Activated T-helper 1 cell treated with anti-CD3 and anti-CD28 coated beads, Interleukin-12 subunit alpha, Interleukin-12 subunit beta, Interleukin-2, Interleukin-4 antibody, amounts not matched to agents 30 ng/mL and 10 ng/mL and 1 ng/mL, durations not matched to agents 14 hours and 24 hours and 36 hours (primary cell): ENCODE measurements at regions of chr18 and their contacts with region 1.

Region 1: DNA sequence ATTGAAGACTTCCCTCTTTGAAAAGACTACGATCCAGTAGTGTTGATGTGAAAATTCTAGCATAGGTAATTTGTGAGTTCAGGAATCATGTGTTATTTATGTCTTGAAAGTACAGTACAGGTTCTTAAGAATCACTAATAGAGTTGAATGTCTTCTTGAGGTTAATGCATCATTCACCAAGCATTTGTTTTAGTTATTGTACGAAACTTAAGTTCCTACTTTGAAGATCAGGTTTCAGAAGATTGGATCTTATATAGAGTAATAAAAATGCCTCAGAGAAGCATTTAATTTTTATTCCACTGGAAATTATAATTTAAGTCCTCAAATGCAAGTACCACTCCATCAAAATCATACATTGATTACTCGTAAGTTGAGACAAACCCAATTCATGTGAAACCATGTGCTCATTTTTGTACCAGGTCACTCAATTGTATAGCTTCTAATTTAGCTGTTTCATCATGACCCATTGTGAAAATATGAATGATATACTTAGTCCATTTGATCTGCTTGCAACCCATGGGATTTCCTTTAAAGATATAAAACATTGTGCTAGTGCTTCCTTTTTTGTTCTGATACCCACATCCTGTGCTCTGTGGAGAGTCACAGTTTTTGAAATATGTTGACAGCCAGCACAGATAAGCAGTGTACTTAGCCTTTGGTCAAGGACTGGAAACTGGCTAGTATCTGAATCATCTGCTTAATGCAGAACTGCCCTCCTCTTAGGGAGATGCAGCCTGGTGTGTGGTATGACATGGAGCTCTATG is 22.5 kb upstream of the RAB27B start:
- DNase-seq: peak; percentile 11
- H3K4me3 Mint-ChIP-seq: no peak overlapping the region
- H3K27ac Mint-ChIP-seq: peak overlapping the region; percentile 6
- H3K4me1 Mint-ChIP-seq: peaks cover 10% of the 10 kb centered on the region
- H3K27me3 Mint-ChIP-seq: peaks cover 4% of the 10 kb centered on the region

Region 2: GRCh38 chr18:54023471-54023870 is 782.3 kb before region 1 on chr18:
- intact Hi-C with region 1: no loop called
- DNase-seq: no peak
- H3K4me3 Mint-ChIP-seq: no peak overlapping the region
- H3K27ac Mint-ChIP-seq: no peak overlapping the region
- H3K4me1 Mint-ChIP-seq: no peaks in the 10 kb centered on the region
- H3K27me3 Mint-ChIP-seq: peaks cover 5% of the 10 kb centered on the region

Region 3: GRCh38 chr18:54181856-54182602 is 623.7 kb before region 1 on chr18:
- intact Hi-C with region 1: loop called (anchors 10 kb)
- DNase-seq: no peak
- H3K4me3 Mint-ChIP-seq: no peak overlapping the region
- H3K27ac Mint-ChIP-seq: no peak overlapping the region
- H3K4me1 Mint-ChIP-seq: peaks cover 22% of the 10 kb centered on the region
- H3K27me3 Mint-ChIP-seq: no peaks in the 10 kb centered on the region

Region 4: DNA sequence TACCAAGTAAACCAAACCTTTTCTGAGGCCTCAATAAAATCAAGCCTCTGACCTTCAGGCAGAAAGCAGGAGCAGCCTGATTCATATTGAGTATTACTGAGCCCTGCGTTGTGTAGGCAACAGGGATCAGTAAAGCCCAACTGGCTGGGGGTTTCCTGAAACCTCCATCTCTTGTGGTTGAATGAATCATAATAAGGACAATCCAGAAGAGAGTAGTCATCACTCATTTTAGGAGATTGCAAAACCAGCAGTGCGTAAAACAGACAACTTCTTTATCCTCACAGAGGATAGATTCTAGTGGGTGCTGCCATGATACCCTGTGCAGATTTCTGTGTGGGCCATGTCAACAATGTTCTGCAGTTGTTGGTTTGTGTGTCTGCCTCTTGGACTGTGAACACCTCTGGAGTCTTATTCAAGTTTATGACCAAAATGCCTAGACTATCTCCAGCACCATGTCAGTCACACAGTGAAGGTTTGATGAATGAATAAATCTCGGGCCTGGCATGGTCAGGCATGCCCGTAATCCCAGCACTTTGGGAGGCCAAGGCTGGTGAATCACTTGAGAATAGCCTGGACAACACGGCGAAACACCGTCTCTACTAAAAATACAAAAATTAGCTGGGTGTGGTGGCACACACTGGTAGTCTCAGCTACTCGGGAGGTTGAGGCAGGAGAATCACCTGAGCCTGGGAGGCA is 29.3 kb before region 1 on chr18:
- intact Hi-C with region 1: loop called (anchors 1 kb)
- DNase-seq: peak; percentile 14
- H3K4me3 Mint-ChIP-seq: no peak overlapping the region
- H3K27ac Mint-ChIP-seq: peak overlapping the region; percentile 71
- H3K4me1 Mint-ChIP-seq: peaks cover 15% of the 10 kb centered on the region
- H3K27me3 Mint-ChIP-seq: peaks cover 4% of the 10 kb centered on the region

Region 5: DNA sequence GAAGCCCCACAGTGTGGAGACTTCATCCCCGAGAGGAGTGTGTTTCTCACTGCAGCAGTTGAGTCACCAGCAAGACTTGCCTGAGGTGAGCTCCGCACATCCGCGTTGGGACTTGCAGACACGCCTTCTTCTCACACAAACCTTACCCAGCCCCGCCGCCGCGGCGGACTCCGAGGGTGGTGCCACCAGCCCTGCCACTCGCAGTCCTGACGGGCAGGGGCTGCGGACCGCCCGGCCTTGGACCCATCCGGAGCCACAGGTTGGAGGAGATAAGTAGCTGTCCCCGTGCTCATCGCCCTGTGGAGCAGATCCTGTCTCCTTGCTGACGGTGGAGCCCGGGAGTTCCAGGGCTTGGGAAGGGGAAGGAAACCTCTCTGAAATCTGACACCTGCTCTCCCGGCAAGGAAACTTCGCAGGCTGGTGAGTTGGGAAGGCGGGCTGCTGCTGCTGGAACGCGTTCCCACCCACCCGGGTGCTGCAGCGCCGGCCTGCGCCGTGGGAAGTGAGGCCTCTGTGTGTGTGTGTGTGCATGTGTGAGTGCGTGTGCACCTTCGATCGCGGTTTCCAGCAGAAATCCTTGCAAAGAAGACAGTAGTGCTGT is 22.6 kb after region 1 on chr18 and contains the start of gene RAB27B:
- intact Hi-C with region 1: loop called (anchors 2 kb)
- DNase-seq: peak; percentile 47
- H3K4me3 Mint-ChIP-seq: peak within 1 kb of the TSS; percentile 74
- H3K27ac Mint-ChIP-seq: peak within 1 kb of the TSS; percentile 9
- H3K4me1 Mint-ChIP-seq: peaks cover 16% of the 10 kb centered on the region
- H3K27me3 Mint-ChIP-seq: peaks cover 33% of the 10 kb centered on the region
- total RNA-seq, gene RAB27B: 0.10 and 0.21 TPM in 2 replicates